Activated naive CD4-positive, alpha-beta T cell treated with anti-CD3 and anti-CD28 coated beads, Interleukin-2, amount 10 ng/mL, durations not matched to agents 7 days and 5 days (primary cell): ENCODE measurements at regions of chr12 and their contacts with region 1.

Region 1: GRCh38 chr12:91109148-91109564 is 2.1 kb downstream of the LUM start:
- DNase-seq: peak; percentile 67
- H3K4me3 Mint-ChIP-seq: no peak overlapping the region
- H3K27ac Mint-ChIP-seq: no peak overlapping the region
- H3K4me1 Mint-ChIP-seq: no peaks in the 10 kb centered on the region
- H3K27me3 Mint-ChIP-seq: no peaks in the 10 kb centered on the region

Region 2: DNA sequence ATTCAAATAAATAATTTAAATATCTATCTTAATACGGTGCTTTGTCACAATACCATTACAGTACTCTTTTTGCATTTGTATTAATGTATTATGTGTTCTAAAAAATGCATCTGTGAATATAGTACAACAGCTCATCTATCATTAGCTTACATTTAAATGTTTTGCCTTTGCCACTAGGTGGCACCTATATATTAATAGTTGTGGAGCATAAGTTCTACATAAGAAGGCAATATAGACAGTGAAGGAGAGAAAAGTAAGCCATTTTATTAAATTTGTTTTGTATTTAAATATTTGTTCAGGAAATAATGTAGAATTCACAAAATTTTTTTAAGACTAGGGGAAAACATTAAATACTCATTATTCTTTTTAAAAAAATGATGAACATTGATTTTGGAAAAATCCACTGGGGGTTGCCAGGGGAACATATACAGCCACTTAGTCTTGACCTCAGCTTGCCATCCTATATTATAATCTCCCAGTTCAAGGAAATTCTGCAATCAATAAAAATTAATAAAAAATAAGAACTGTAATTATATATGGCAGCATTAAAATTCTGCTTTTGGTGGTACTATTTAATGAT is 164.0 kb before region 1 on chr12:
- CTCF ChIA-PET with region 1: interaction called, 11 read pairs
- DNase-seq: no peak
- H3K4me3 Mint-ChIP-seq: no peak overlapping the region
- H3K27ac Mint-ChIP-seq: no peak overlapping the region
- H3K4me1 Mint-ChIP-seq: no peaks in the 10 kb centered on the region
- H3K27me3 Mint-ChIP-seq: no peaks in the 10 kb centered on the region

Region 3: GRCh38 chr12:90978117-90978770 is 130.9 kb before region 1 on chr12:
- CTCF ChIA-PET with region 1: interaction called, 41 read pairs
- DNase-seq: no peak
- H3K4me3 Mint-ChIP-seq: no peak overlapping the region
- H3K27ac Mint-ChIP-seq: no peak overlapping the region
- H3K4me1 Mint-ChIP-seq: no peaks in the 10 kb centered on the region
- H3K27me3 Mint-ChIP-seq: no peaks in the 10 kb centered on the region